CD4-positive, alpha-beta memory T cell (primary cell): ENCODE measurements at regions of chr22 and their contacts with region 1.

Region 1: GRCh38 chr22:35330258-35330861 is 30.7 kb downstream of the TOM1 start:
- DNase-seq: peak; percentile 50 to 76 (median 52)
- H3K4me3 ChIP-seq: no peak overlapping the region
- H3K4me3 Mint-ChIP-seq: peak overlapping the region; percentile 24 to 81 (median 70)
- H3K27ac ChIP-seq: peak overlapping the region; percentile 30
- H3K27ac Mint-ChIP-seq: peak overlapping the region; percentile 86 to 97 (median 93)
- H3K4me1 ChIP-seq: peaks cover 49% of the 10 kb centered on the region
- H3K4me1 Mint-ChIP-seq: peaks cover 17 to 59% (median 38%) of the 10 kb centered on the region in 4 donors
- H3K27me3 ChIP-seq: no peaks in the 10 kb centered on the region
- H3K27me3 Mint-ChIP-seq: no peaks in the 10 kb centered on the region

Region 2: GRCh38 chr22:35306350-35306967 is 23.9 kb before region 1 on chr22:
- CTCF ChIA-PET with region 1: interaction called, 9 read pairs
- POLR2A ChIA-PET with region 1: interaction called, 11 read pairs
- intact Hi-C with region 1: no loop called
- DNase-seq: peak in 3 of 5 donors; percentile 26 to 39 (median 32)
- H3K4me3 ChIP-seq: no peak overlapping the region
- H3K4me3 Mint-ChIP-seq: peak overlapping the region in 7 of 8 donors; percentile 41 to 80 (median 69)
- H3K27ac ChIP-seq: peak overlapping the region; percentile 1
- H3K27ac Mint-ChIP-seq: peak overlapping the region; percentile 77 to 88 (median 87)
- H3K4me1 ChIP-seq: peaks cover 67% of the 10 kb centered on the region
- H3K4me1 Mint-ChIP-seq: peaks cover 55 to 93% (median 78%) of the 10 kb centered on the region in 4 donors
- H3K27me3 ChIP-seq: no peaks in the 10 kb centered on the region
- H3K27me3 Mint-ChIP-seq: no peaks in the 10 kb centered on the region

Region 3: GRCh38 chr22:35660291-35661127 is 330.1 kb after region 1 on chr22:
- CTCF ChIA-PET with region 1: no interaction called
- POLR2A ChIA-PET with region 1: no interaction called
- intact Hi-C with region 1: no loop called
- DNase-seq: peak; percentile 78 to 91 (median 80)
- H3K4me3 ChIP-seq: peak overlapping the region; percentile 11 to 34
- H3K4me3 Mint-ChIP-seq: peak overlapping the region; percentile 52 to 87 (median 79)
- H3K27ac ChIP-seq: peak overlapping the region; percentile 90
- H3K27ac Mint-ChIP-seq: peak overlapping the region; percentile 92 to 99 (median 96)
- H3K4me1 ChIP-seq: peaks cover 80% of the 10 kb centered on the region
- H3K4me1 Mint-ChIP-seq: peaks cover 45 to 87% (median 70%) of the 10 kb centered on the region in 4 donors
- H3K27me3 ChIP-seq: no peaks in the 10 kb centered on the region
- H3K27me3 Mint-ChIP-seq: no peaks in the 10 kb centered on the region